ENCODE measurements at regions of chr11 and their contacts with region 1.

Region 1: GRCh38 chr11:77127232-77127911 is 674 bp upstream of the MYO7A start:
- DNase-seq: peak; percentile 16 to 88 (median 72)

Region 2: GRCh38 chr11:77187776-77188632 is 60.6 kb after region 1 on chr11:
- intact Hi-C with region 1: loop called (anchors 5 kb)
- DNase-seq: peak; percentile 46 to 94 (median 85)

Measured in head of caudate nucleus (tissue), 42 donors.